ENCODE measurements at regions of chr3 and their contacts with region 1.

Region 1: DNA sequence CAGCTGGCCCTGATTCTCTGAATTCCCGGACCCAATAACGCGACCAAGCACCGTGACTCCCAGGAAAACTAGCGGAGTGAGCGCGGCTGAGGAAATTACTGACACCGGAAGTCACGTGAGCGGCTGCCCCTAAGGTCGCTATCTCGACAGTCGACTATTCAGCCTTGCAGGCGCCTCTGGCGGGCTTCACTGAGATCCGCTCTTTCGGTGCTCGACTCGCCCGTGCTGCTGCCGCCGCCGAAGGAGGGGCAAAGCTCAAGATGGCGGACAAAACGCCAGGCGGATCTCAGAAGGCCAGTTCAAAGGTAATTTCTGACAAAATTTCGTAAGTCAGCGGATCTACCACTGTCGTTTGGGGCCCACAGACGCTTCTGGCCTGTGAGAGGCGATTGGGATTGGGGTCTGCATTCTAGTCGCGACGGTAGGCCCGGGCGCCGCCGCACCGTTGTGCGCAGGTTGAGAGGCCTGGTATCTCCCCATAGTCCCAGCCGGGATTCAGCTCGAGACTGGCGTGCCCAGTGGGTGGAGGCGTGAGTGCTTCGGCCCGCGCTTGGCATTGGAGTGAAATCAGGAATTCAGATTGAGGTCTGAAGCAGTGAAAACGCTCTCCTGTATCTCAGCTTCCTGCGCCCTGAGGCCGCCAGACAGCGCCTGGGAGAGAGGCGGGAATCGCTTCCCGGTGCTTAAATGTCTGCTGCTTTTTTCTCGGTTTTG is at the start of gene U2SURP:
- DNase-seq: peak; percentile 95
- ATAC-seq: peak; percentile 96
- H3K4me3 ChIP-seq: peak within 1 kb of the TSS; percentile 73 to 100 (median 97)
- H3K4me3 Mint-ChIP-seq: peak within 1 kb of the TSS; percentile 96
- H3K27ac ChIP-seq: peak within 1 kb of the TSS; percentile 86 to 98
- H3K27ac Mint-ChIP-seq: peak within 1 kb of the TSS; percentile 96
- H3K4me1 ChIP-seq: peaks cover 19 to 20% of the 10 kb centered on the region in 2 donors
- H3K4me1 Mint-ChIP-seq: peaks cover 34% of the 10 kb centered on the region
- H3K27me3 ChIP-seq: no peaks in the 10 kb centered on the region
- H3K27me3 Mint-ChIP-seq: no peaks in the 10 kb centered on the region
- CTCF ChIP-seq: no peak
- total RNA-seq, gene U2SURP: 138 and 169 TPM in 2 replicates

Region 2: GRCh38 chr3:142148792-142149672 is 852.5 kb before region 1 on chr3 and contains the start of gene TFDP2:
- CTCF ChIA-PET with region 1: no interaction called
- POLR2A ChIA-PET with region 1: no interaction called
- intact Hi-C with region 1: loop called (anchors 5 kb)
- DNase-seq: peak; percentile 88
- ATAC-seq: peak; percentile 98
- H3K4me3 ChIP-seq: peak within 1 kb of the TSS; percentile 56 to 85 (median 74)
- H3K4me3 Mint-ChIP-seq: peak within 1 kb of the TSS; percentile 88
- H3K27ac ChIP-seq: peak within 1 kb of the TSS in 1 of 2 donors; percentile 76
- H3K27ac Mint-ChIP-seq: peak within 1 kb of the TSS; percentile 87
- H3K4me1 ChIP-seq: peaks cover 7 to 15% of the 10 kb centered on the region in 2 donors
- H3K4me1 Mint-ChIP-seq: peaks cover 19% of the 10 kb centered on the region
- H3K27me3 ChIP-seq: no peaks in the 10 kb centered on the region
- H3K27me3 Mint-ChIP-seq: no peaks in the 10 kb centered on the region
- CTCF ChIP-seq: no peak
- total RNA-seq, gene TFDP2: 31.7 and 32.9 TPM in 2 replicates

Region 3: DNA sequence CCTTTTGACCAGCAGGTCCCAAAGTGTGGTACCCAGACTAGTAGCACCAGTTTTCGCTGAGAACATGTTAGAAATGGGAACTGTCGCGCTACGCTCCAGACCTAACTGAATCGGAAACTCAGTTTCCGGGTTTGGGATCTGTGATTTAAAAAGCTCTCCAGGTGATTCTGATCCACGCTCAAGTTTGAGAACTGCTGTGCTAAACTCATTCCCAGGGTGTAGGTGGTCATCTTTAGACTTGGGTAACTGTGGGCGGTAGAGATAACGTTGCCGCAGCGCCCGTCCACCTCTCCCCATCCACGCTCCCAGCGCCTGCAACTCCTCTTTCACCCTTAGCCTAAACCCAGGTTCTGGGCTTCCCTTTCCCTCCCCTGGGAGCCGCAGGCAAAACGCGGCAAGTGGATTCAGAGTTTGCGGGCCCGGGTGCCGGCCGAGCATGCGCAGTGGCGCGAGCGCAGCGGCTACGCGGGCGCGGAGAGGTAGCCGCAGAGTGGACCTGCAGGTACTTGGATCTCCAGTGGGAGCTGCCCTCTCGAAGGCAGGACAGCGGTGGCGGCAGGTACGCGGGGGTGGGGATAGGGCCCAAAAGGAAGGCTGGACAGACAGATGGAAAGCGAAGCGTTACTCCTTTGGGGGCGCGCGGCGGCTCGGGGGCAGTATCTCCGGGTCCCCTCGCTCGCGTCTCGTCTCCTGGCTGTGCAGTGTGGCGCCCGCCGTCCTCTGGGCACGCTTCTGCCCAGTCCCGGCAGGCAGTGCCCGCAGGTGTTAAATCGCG is 405.4 kb before region 1 on chr3 and contains the start of gene PLS1:
- CTCF ChIA-PET with region 1: no interaction called
- POLR2A ChIA-PET with region 1: no interaction called
- intact Hi-C with region 1: loop called (anchors 5 kb)
- DNase-seq: peak; percentile 87
- ATAC-seq: peak; percentile 87
- H3K4me3 ChIP-seq: peak within 1 kb of the TSS; percentile 68 to 77 (median 72)
- H3K4me3 Mint-ChIP-seq: peak within 1 kb of the TSS; percentile 99
- H3K27ac ChIP-seq: peak within 1 kb of the TSS in 1 of 2 donors; percentile 27
- H3K27ac Mint-ChIP-seq: peak within 1 kb of the TSS; percentile 87
- H3K4me1 ChIP-seq: peaks cover 10 to 15% of the 10 kb centered on the region in 2 donors
- H3K4me1 Mint-ChIP-seq: peaks cover 19% of the 10 kb centered on the region
- H3K27me3 ChIP-seq: peaks cover 0 to 7% (median 2%) of the 10 kb centered on the region in 4 experiments
- H3K27me3 Mint-ChIP-seq: peaks cover 12% of the 10 kb centered on the region
- CTCF ChIP-seq: no peak
- total RNA-seq, gene PLS1: 0.73 and 0.74 TPM in 2 replicates

Region 4: GRCh38 chr3:142723968-142724681 is 277.4 kb before region 1 on chr3 and contains the start of gene TRPC1:
- CTCF ChIA-PET with region 1: no interaction called
- POLR2A ChIA-PET with region 1: no interaction called
- intact Hi-C with region 1: loop called (anchors 1 kb)
- DNase-seq: peak; percentile 88
- ATAC-seq: peak; percentile 93
- H3K4me3 ChIP-seq: peak within 1 kb of the TSS; percentile 44 to 76 (median 65)
- H3K4me3 Mint-ChIP-seq: peak within 1 kb of the TSS; percentile 92
- H3K27ac ChIP-seq: peak within 1 kb of the TSS in 1 of 2 donors; percentile 41
- H3K27ac Mint-ChIP-seq: peak within 1 kb of the TSS; percentile 81
- H3K4me1 ChIP-seq: peaks cover 8 to 11% of the 10 kb centered on the region in 2 donors
- H3K4me1 Mint-ChIP-seq: peaks cover 13% of the 10 kb centered on the region
- H3K27me3 ChIP-seq: peaks cover 0 to 13% (median 10%) of the 10 kb centered on the region in 4 experiments
- H3K27me3 Mint-ChIP-seq: peaks cover 33% of the 10 kb centered on the region
- CTCF ChIP-seq: no peak
- total RNA-seq, gene TRPC1: 3.3 and 3.8 TPM in 2 replicates

Region 5: DNA sequence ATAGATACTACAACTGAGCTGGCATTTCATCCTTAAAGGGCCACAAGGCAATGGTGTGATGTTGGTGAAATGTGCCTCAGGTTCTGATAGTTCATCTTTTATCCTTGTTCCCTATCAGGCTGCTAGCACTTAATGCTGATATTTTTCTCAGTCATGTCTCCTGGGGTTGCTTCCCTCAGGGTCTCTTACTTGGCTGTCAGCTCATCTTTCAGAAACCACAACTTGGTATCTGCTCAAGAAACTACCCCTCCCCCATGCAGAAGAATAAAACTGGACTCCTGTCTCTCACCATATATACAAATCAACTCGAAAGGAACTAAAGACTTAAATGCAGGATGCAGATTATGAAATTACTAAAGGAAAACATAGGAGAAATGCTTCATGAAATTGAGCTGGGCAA is 426.1 kb after region 1 on chr3:
- CTCF ChIA-PET with region 1: no interaction called
- POLR2A ChIA-PET with region 1: interaction called, 18 read pairs
- intact Hi-C with region 1: no loop called
- DNase-seq: no peak
- ATAC-seq: no peak
- H3K4me3 ChIP-seq: no peak overlapping the region
- H3K4me3 Mint-ChIP-seq: no peak overlapping the region
- H3K27ac ChIP-seq: no peak overlapping the region
- H3K27ac Mint-ChIP-seq: no peak overlapping the region
- H3K4me1 ChIP-seq: peaks cover 32 to 49% of the 10 kb centered on the region in 2 donors
- H3K4me1 Mint-ChIP-seq: peaks cover 60% of the 10 kb centered on the region
- H3K27me3 ChIP-seq: no peaks in the 10 kb centered on the region
- H3K27me3 Mint-ChIP-seq: no peaks in the 10 kb centered on the region
- CTCF ChIP-seq: no peak